ENCODE measurements at regions of chr9 and their contacts with region 1.

Region 1: GRCh38 chr9:91131433-91131839 is 230.3 kb downstream of the AUH start:
- DNase-seq: peak; percentile 81
- H3K4me3 Mint-ChIP-seq: peak overlapping the region; percentile 49
- H3K27ac Mint-ChIP-seq: peak overlapping the region; percentile 98
- H3K4me1 Mint-ChIP-seq: peaks cover 49% of the 10 kb centered on the region
- H3K27me3 Mint-ChIP-seq: no peaks in the 10 kb centered on the region

Region 2: DNA sequence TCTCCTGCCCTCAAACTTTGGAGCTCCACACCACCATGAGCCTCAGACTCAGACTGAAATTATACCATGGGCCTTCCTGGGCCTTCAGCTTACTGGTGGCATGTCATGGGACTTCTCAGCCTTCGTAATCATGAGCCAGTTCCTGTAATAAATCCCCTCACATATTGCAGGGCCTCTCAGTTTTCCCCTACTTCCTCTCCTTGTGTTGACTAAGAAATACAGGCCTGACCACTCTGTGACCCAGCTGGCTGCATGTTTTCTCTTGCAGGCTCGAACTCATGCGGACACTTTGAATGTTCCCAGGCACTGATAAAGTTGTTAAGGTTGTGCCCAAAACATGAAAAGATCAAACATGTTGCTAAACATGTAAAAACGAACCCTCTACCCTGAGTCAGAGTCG is 1926.6 kb before region 1 on chr9:
- intact Hi-C with region 1: no loop called
- DNase-seq: no peak
- H3K4me3 Mint-ChIP-seq: no peak overlapping the region
- H3K27ac Mint-ChIP-seq: no peak overlapping the region
- H3K4me1 Mint-ChIP-seq: no peaks in the 10 kb centered on the region
- H3K27me3 Mint-ChIP-seq: no peaks in the 10 kb centered on the region

Region 3: DNA sequence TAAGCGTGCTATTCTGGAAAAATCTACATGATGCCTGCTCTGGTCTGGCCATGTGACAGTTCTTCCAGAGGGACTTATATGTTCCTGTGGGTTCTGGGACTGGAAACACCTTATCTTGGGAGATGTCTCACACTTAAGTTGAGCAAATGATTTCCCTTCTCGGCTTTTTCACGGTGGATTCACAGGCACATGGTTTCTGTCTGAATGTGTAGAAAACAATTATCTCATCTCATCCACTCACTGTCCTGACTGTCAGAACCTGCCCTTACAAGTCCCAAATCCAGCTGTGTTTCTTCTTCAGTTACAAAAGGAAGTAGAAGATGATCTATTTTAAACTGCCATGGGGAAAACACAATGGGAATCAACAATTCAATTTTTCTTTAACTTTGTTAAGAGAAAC is 145.8 kb before region 1 on chr9:
- intact Hi-C with region 1: loop called (anchors 5 kb)
- DNase-seq: no peak
- H3K4me3 Mint-ChIP-seq: no peak overlapping the region
- H3K27ac Mint-ChIP-seq: no peak overlapping the region
- H3K4me1 Mint-ChIP-seq: peaks cover 29% of the 10 kb centered on the region
- H3K27me3 Mint-ChIP-seq: no peaks in the 10 kb centered on the region

Region 4: DNA sequence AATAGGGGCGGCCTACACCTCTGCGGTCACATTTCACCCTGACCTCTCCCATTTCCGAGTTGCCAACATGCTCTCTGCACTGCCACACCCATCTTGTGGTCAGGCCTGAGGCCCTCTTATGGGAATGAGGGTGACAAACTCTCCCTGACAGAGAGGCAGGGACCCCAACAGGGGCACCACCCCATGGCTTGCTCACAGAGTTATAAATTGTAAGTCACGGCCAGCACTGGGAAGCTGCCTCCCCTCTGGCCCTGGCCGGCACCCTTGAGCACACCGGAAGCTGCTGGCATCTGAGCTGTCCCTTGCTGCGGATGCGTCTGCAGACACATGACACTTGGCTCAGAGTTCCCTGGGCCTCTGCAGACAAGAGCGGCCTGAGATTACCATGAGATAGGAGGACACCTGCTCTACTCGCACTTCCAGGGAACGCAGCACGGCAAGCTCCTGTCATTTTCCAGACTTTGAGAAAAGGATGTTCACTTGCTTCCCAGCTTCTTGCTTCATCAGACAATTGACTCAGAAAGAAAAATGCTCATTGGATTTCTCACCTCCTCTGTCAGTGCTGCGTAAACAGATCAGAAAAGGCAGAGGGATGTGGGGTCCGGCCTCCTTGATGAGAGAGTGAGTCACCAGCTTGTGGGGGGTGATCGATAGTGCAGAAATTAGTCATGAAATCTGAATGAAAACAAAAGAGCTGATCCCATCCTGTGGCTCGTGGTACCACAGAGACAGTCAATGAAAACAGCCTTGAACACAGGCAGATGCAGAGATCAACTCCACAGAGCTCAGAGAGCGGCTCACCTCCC is 60.0 kb before region 1 on chr9:
- intact Hi-C with region 1: loop called (anchors 1 kb)
- DNase-seq: peak; percentile 62
- H3K4me3 Mint-ChIP-seq: peak overlapping the region; percentile 46
- H3K27ac Mint-ChIP-seq: peak overlapping the region; percentile 98
- H3K4me1 Mint-ChIP-seq: peaks cover 16% of the 10 kb centered on the region
- H3K27me3 Mint-ChIP-seq: no peaks in the 10 kb centered on the region

Region 5: DNA sequence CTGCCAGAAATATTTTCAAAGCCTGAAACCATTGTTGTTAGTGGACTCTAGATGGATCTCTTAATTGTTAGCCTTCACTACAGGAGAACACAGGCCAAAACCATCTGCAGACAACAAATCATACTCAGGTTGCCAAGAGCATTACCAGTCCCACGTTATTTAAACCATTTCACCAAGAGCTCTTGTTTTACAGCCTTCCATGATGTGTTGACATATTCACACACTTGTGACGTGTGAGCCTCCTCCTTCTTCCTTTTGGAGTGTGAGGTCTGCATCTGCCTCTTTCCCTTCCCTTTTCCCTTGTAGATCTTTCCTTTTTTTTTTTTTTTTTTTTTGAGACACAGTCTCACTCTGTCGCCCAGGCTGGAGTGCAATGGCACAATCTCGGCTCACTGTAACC is 48.7 kb before region 1 on chr9:
- intact Hi-C with region 1: no loop called
- DNase-seq: no peak
- H3K4me3 Mint-ChIP-seq: no peak overlapping the region
- H3K27ac Mint-ChIP-seq: no peak overlapping the region
- H3K4me1 Mint-ChIP-seq: peaks cover 37% of the 10 kb centered on the region
- H3K27me3 Mint-ChIP-seq: no peaks in the 10 kb centered on the region

Region 6: GRCh38 chr9:91101611-91102168 is 29.7 kb before region 1 on chr9:
- intact Hi-C with region 1: loop called (anchors 1 kb)
- DNase-seq: peak; percentile 85
- H3K4me3 Mint-ChIP-seq: peak overlapping the region; percentile 78
- H3K27ac Mint-ChIP-seq: peak overlapping the region; percentile 93
- H3K4me1 Mint-ChIP-seq: peaks cover 64% of the 10 kb centered on the region
- H3K27me3 Mint-ChIP-seq: no peaks in the 10 kb centered on the region

Region 7: DNA sequence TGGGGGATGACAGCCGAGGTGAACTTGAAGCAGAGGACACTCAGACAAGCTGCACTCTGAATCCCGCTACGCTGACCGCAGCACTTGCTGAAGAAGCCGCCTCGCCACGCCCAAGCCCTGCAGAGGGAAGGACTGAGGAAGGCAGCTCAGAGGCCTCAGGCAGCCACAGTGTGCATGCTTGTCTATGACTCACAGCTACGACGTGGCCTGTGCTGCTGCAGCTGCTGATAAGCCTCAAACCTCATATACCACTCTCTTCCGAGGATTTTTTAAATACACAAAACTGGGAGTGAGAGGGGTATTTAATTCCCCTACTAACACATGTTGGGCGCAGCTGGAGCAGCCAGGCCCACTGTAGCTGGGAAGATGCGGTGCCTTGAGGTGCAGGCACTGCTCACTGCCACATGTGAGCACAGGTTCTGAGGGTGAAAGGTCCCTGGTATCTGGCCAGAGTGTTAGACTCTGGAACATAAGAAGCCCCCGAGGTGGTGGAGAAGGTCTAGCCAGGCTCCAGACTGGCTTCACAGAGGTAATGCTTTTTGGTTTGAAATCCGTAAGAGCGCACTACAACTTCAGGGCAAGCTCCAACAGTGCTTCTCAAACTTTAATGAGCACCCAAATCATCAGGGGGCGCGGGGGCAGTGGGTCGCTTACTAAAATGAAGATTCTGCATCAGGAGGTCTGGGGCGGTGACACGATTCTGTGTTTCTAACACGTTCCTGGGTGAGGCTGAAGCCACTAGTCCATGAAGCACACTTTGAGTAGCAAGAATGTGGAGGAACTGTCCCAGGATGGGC is 33.5 kb after region 1 on chr9:
- intact Hi-C with region 1: loop called (anchors 1 kb)
- DNase-seq: peak; percentile 82
- H3K4me3 Mint-ChIP-seq: peak overlapping the region; percentile 84
- H3K27ac Mint-ChIP-seq: peak overlapping the region; percentile 98
- H3K4me1 Mint-ChIP-seq: peaks cover 58% of the 10 kb centered on the region
- H3K27me3 Mint-ChIP-seq: no peaks in the 10 kb centered on the region

Region 8: DNA sequence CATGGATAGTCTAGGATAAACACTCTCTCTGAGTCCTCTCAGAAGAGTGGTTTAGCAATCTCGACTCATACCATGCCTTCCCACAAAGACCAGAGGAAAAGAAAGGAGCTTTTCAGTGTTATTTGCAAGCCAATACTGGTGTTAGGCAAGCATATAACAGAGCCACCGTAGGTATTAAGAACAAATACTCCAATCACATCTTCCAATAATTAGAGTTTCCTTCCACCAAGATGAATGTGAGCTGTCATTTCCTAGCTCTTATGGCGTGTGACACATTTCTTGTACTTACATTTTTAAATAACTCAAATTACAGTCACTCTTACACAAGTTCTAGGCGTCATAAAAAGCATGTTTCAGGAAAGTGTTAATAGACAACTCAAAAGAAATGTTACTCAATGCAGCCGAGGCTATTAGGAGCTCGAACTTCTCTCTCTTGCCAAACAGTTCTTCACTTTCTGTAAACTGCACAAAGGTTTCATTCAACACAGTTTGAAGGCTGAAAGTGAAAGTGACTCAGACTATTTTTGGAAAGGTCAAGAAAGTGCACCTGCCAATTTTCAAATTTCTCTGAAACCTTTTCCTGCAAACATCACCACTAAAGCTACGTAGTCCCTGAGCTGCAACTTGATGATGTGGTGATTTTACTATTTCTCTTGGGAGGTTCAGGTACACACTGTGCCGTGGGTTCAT is 76.4 kb after region 1 on chr9:
- intact Hi-C with region 1: loop called (anchors 1 kb)
- DNase-seq: no peak
- H3K4me3 Mint-ChIP-seq: peak overlapping the region; percentile 49
- H3K27ac Mint-ChIP-seq: peak overlapping the region; percentile 93
- H3K4me1 Mint-ChIP-seq: peaks cover 67% of the 10 kb centered on the region
- H3K27me3 Mint-ChIP-seq: no peaks in the 10 kb centered on the region

Region 9: DNA sequence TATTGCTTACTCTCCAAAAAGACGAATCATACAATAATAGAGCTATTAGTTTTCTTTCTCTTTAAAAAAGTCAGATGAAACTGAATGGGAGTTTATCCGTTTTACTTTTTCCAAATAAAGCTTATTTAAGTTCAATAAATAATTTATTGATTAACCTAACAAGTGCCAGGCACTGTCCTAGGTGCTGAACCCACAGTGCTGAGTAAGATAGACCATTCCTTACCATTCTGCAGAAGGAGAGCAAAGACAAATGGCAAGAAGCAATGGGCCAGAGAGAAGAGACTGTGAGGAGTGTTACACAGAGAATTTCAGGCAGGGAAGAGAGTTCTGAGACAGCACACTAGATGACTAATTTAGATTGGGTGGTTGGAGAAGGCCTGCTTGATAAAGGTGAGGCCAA is 103.1 kb after region 1 on chr9:
- intact Hi-C with region 1: no loop called
- DNase-seq: no peak
- H3K4me3 Mint-ChIP-seq: no peak overlapping the region
- H3K27ac Mint-ChIP-seq: no peak overlapping the region
- H3K4me1 Mint-ChIP-seq: peaks cover 7% of the 10 kb centered on the region
- H3K27me3 Mint-ChIP-seq: no peaks in the 10 kb centered on the region

Region 10: GRCh38 chr9:91346652-91347051 is 215.2 kb after region 1 on chr9:
- intact Hi-C with region 1: loop called (anchors 5 kb)
- DNase-seq: no peak
- H3K4me3 Mint-ChIP-seq: no peak overlapping the region
- H3K27ac Mint-ChIP-seq: peak overlapping the region; percentile 44
- H3K4me1 Mint-ChIP-seq: peaks cover 61% of the 10 kb centered on the region
- H3K27me3 Mint-ChIP-seq: no peaks in the 10 kb centered on the region

Measured in activated T-helper 2 cell treated with anti-CD3 and anti-CD28 coated beads, Interferon-gamma antibody, Interleukin-2, Interleukin-4, amounts not matched to agents 10 μg/mL and 5 μg/mL and 100 μg/mL, durations not matched to agents 14 hours and 24 hours and 36 hours (primary cell).